ENCODE measurements at regions of chr11 and their contacts with region 1.

Region 1: DNA sequence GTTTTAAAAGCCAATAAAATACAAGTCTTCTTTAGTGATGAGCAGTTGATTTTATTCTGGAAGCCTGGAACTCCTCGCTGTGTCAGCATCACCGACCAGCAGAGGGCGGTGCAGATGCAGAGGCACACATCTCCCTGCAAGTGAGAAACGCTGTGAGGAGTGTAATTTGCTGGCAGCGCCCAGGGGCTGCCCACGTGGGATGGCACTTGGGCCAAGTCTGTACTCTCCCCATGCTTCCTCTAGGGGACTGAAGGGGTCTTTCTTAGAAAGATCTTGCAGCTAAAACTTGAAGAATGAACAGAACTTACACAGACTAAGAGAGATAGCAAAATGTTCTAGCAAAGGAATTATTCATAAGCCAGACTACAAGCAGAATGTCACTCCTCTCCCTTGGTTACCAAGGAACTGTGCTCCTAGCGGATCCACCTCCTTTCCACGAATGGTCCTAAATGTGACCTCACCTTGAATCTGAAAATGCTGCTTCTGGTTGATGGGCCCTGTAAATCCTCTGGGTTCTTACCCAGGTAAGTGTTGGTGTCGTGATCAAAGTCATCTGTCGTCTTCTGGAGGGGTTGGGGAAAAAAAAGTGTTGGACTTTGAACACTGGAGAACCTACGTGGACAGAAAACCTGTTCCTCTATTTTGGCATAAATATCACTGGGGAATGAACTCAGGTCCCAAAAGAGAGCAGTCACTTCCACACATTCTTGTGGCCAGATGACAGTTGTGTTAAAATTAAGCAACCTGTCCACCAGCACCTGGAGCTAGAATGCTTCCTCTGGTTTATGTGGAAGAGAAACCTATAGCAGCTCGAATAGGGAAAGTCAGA is 31.8 kb downstream of the CNTF start:
- DNase-seq: peak; percentile 88
- H3K4me3 Mint-ChIP-seq: no peak overlapping the region
- H3K27ac Mint-ChIP-seq: no peak overlapping the region
- H3K4me1 Mint-ChIP-seq: peaks cover 31% of the 10 kb centered on the region
- H3K27me3 Mint-ChIP-seq: no peaks in the 10 kb centered on the region
- CTCF ChIP-seq: peak; percentile 81

Region 2: GRCh38 chr11:58524232-58525036 is 129.9 kb before region 1 on chr11:
- CTCF ChIA-PET with region 1: no interaction called
- intact Hi-C with region 1: no loop called
- DNase-seq: peak; percentile 72
- H3K4me3 Mint-ChIP-seq: peak overlapping the region; percentile 43
- H3K27ac Mint-ChIP-seq: no peak overlapping the region
- H3K4me1 Mint-ChIP-seq: peaks cover 10% of the 10 kb centered on the region
- H3K27me3 Mint-ChIP-seq: peaks cover 8% of the 10 kb centered on the region
- CTCF ChIP-seq: peak; percentile 89

Region 3: GRCh38 chr11:58675334-58676155 is 21.3 kb after region 1 on chr11:
- CTCF ChIA-PET with region 1: interaction called, 3 read pairs
- intact Hi-C with region 1: loop called (anchors 1 kb)
- DNase-seq: peak; percentile 87
- H3K4me3 Mint-ChIP-seq: no peak overlapping the region
- H3K27ac Mint-ChIP-seq: no peak overlapping the region
- H3K4me1 Mint-ChIP-seq: peaks cover 8% of the 10 kb centered on the region
- H3K27me3 Mint-ChIP-seq: no peaks in the 10 kb centered on the region
- CTCF ChIP-seq: peak; percentile 69

Region 4: DNA sequence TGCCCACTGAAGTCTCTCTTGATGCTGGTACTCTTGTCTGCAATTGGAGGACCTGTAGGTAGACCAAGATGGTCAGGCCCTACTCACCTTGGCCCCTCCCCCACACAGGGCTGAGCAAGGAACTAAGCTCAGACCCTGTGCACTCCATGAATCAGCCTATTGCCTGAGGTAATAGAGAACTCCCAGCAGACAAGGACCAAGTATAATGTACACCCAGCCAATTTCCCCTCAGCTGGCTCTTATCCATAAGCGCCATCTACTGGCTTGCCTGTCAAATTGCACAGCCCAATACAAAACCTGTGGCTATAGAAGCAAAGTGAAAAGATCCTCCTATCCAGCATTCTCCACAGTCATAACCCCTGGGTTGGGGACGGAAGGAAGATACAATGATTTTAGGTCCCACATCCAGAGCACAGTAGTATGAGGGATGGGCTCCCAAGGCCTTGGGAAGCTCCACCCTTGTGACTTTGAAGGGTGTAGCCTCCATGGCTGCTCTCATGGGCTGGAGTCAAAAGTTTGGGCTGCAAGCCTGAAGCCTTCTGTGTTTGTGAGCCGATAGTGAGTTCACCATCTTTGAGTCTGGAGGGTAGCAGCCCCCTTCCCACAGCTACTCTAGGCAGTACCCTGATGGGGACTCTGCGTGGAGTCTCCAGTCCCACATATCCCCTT is 134.2 kb after region 1 on chr11:
- CTCF ChIA-PET with region 1: interaction called, 4 read pairs
- intact Hi-C with region 1: loop called (anchors 1 kb)
- DNase-seq: peak; percentile 59
- H3K4me3 Mint-ChIP-seq: no peak overlapping the region
- H3K27ac Mint-ChIP-seq: no peak overlapping the region
- H3K4me1 Mint-ChIP-seq: no peaks in the 10 kb centered on the region
- H3K27me3 Mint-ChIP-seq: no peaks in the 10 kb centered on the region
- CTCF ChIP-seq: peak; percentile 70

Region 5: GRCh38 chr11:58923300-58923788 is 269.1 kb after region 1 on chr11:
- CTCF ChIA-PET with region 1: no interaction called
- intact Hi-C with region 1: loop called (anchors 5 kb)
- DNase-seq: no peak
- H3K4me3 Mint-ChIP-seq: peak overlapping the region; percentile 59
- H3K27ac Mint-ChIP-seq: no peak overlapping the region
- H3K4me1 Mint-ChIP-seq: peaks cover 17% of the 10 kb centered on the region
- H3K27me3 Mint-ChIP-seq: no peaks in the 10 kb centered on the region
- CTCF ChIP-seq: no peak

Region 6: DNA sequence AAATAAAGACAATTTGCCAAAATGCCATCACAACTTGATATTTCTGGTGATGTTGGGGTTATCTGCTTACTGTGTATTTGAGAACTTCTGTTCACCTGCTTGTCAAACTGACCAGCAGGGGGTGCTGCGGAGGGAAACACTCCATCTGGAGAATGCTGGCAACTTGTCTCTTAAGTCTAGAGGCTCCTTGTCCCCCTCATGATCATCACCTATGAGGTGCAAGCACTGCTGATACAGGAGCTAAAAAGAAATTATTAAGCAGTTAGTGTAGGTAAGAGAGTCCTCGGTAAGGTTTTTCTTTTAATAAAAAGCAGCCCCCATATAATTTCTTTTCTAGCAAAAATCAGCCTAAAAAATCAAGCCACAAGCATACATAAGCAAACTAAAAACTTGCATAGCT is 399.1 kb after region 1 on chr11:
- CTCF ChIA-PET with region 1: interaction called, 6 read pairs
- intact Hi-C with region 1: loop called (anchors 2 kb)
- DNase-seq: peak; percentile 80
- H3K4me3 Mint-ChIP-seq: no peak overlapping the region
- H3K27ac Mint-ChIP-seq: no peak overlapping the region
- H3K4me1 Mint-ChIP-seq: no peaks in the 10 kb centered on the region
- H3K27me3 Mint-ChIP-seq: peaks cover 39% of the 10 kb centered on the region
- CTCF ChIP-seq: peak; percentile 55

Measured in Calu3 (cell line).